SK-N-SH (cell line): ENCODE measurements at regions of chr2 and their contacts with region 1.

Region 1: DNA sequence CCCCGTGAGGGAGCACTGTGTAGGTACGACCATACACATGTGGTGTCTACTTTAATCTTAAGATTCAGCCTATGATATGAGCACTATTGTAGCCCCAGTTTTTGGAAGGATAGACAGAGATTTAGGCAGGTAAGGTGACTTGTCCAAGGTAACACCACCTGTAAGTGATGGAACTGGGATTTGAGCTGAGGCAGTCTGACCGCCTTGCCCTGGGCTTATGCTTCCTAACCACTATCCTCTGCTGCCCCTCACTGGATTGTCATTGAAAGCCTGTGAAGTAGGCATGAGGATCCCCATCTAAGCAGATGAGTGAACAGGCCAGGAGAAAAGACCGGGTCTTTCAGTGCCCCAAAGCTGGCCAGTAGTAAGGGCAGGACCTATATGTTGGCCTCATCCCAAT is 343.8 kb downstream of the CYRIA start:
- DNase-seq: peak; percentile 69
- H3K4me3 ChIP-seq: no peak overlapping the region
- H3K27ac ChIP-seq: no peak overlapping the region
- H3K4me1 ChIP-seq: peaks cover 0 to 61% of the 10 kb centered on the region in 2 experiments; a peak in 2 of 4 replicates
- H3K27me3 ChIP-seq: no peaks in the 10 kb centered on the region
- CTCF ChIP-seq: no peak
- EP300 ChIP-seq: no peak
- RAD21 ChIP-seq: peak; percentile 74

Region 2: GRCh38 chr2:15955295-15956166 is 366.3 kb before region 1 on chr2:
- CTCF ChIA-PET with region 1: no interaction called
- POLR2A ChIA-PET with region 1: no interaction called
- DNase-seq: no peak
- H3K4me3 ChIP-seq: no peak overlapping the region
- H3K27ac ChIP-seq: no peak overlapping the region
- H3K4me1 ChIP-seq: no peaks in the 10 kb centered on the region; a peak in 1 of 4 replicates
- H3K27me3 ChIP-seq: no peaks in the 10 kb centered on the region
- CTCF ChIP-seq: no peak
- EP300 ChIP-seq: no peak
- RAD21 ChIP-seq: no peak

Region 3: GRCh38 chr2:16067037-16067406 is 254.8 kb before region 1 on chr2:
- CTCF ChIA-PET with region 1: no interaction called
- POLR2A ChIA-PET with region 1: no interaction called
- DNase-seq: no peak
- H3K4me3 ChIP-seq: no peak overlapping the region
- H3K27ac ChIP-seq: no peak overlapping the region
- H3K4me1 ChIP-seq: peaks cover 0 to 13% of the 10 kb centered on the region in 2 experiments; a peak in 1 of 4 replicates
- H3K27me3 ChIP-seq: no peaks in the 10 kb centered on the region
- CTCF ChIP-seq: no peak
- EP300 ChIP-seq: no peak
- RAD21 ChIP-seq: no peak

Region 4: GRCh38 chr2:16293398-16293797 is 28.5 kb before region 1 on chr2:
- CTCF ChIA-PET with region 1: interaction called, 14 read pairs
- POLR2A ChIA-PET with region 1: no interaction called
- DNase-seq: peak; percentile 73
- H3K4me3 ChIP-seq: no peak overlapping the region; a peak in 1 of 4 replicates
- H3K27ac ChIP-seq: peak overlapping the region in 1 of 2 experiments; percentile 71; a peak in 2 of 4 replicates
- H3K4me1 ChIP-seq: peaks cover 0 to 29% of the 10 kb centered on the region in 2 experiments; a peak in 2 of 4 replicates
- H3K27me3 ChIP-seq: no peaks in the 10 kb centered on the region
- CTCF ChIP-seq: no peak
- EP300 ChIP-seq: peak in 1 of 2 experiments; percentile 93; a peak in 2 of 4 replicates
- RAD21 ChIP-seq: peak; percentile 31

Region 5: DNA sequence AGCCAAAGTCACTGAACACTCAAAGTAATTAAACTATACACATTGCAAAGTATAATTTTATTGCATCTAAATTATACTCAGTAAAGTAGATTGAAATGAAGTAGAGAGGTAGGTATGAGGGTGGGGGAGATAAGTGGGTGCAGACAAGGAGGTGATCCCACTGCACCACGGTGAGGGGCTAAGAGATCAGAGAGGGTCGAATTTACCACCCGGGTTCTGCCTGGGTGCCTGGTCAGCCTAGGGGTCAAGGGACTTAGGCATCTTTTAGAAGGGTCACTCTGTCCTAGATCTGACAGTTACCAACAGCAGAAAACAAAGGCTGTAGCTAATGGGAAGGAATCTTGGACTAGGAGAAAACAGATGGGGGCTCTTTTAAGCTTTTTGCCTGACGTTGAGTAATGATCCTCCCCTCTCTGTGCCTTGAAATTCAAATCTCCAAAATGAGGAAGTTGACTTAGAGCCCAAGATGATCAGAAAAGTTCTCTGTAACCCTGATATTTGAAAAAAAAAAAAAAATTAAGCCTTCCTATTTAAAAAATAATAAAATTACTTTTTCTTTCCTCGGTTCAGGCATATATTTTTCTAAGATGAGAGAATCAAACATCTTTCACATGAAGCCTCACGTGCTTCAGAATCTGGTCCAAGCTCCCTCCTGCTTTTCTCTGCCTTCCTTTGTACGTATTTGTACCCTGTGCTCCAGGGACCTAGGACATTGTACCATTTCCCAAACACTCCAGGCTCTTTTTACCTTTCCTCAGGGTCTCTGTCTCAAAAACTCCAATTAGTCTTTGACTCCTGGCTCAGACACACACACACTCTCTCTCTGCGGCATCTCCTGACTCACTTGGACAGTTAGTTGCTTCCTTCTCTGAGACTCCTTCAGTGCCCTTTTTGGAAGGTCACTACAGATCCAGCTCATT is 10.1 kb before region 1 on chr2:
- CTCF ChIA-PET with region 1: interaction called, 28 read pairs
- POLR2A ChIA-PET with region 1: interaction called, 3 read pairs
- DNase-seq: no peak
- H3K4me3 ChIP-seq: no peak overlapping the region
- H3K27ac ChIP-seq: no peak overlapping the region
- H3K4me1 ChIP-seq: no peaks in the 10 kb centered on the region; a peak in 1 of 4 replicates
- H3K27me3 ChIP-seq: no peaks in the 10 kb centered on the region
- CTCF ChIP-seq: no peak
- EP300 ChIP-seq: no peak
- RAD21 ChIP-seq: no peak

Region 6: GRCh38 chr2:16334886-16335603 is 13.2 kb after region 1 on chr2:
- CTCF ChIA-PET with region 1: interaction called, 11 read pairs
- POLR2A ChIA-PET with region 1: no interaction called
- DNase-seq: peak; percentile 77
- H3K4me3 ChIP-seq: no peak overlapping the region
- H3K27ac ChIP-seq: peak overlapping the region in 1 of 2 experiments; percentile 93; a peak in 2 of 4 replicates
- H3K4me1 ChIP-seq: peaks cover 0 to 44% of the 10 kb centered on the region in 2 experiments; a peak in 2 of 4 replicates
- H3K27me3 ChIP-seq: no peaks in the 10 kb centered on the region
- CTCF ChIP-seq: no peak
- EP300 ChIP-seq: peak in 1 of 2 experiments; percentile 89; a peak in 2 of 4 replicates
- RAD21 ChIP-seq: peak; percentile 40; the same call in 1 of the 2 replicates